ENCODE measurements at regions of chr17 and their contacts with region 1.

Region 1: DNA sequence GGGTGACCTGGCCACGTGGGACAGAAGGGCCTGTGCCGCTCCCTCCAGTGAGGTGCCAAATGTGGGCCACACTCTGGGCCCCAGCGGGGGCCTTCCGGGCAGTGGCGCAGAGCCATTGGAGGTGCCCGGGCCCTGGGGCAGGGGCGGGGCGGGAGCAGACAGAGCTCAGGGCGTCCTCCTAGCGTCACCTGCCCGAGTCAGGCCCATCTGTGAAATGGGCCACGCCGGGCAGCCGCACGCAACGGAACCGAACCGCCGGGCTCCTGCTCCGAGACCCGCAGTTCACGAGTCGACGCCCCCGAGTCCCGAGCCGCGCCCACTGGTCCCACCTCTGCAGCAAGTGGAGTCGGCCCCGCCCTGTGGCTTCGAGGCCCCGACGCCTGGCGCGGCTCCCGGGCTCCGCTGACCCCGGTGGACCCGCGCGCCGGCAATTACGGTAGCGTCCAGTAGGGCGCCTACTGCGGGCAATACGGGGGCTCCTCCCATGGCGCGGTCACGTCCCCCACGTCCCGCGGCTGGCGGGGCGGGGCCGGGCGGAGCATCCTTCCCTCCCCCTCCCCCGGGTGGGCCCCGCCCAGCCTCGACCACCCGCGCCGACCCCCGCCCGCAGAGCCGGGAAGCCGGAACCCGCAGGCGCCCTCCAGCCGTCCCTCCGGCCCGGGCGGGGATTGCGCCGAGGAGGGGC is 1.9 kb downstream of the SLC16A3 start:
- DNase-seq: peak; percentile 94
- ATAC-seq: peak; percentile 82

Region 2: DNA sequence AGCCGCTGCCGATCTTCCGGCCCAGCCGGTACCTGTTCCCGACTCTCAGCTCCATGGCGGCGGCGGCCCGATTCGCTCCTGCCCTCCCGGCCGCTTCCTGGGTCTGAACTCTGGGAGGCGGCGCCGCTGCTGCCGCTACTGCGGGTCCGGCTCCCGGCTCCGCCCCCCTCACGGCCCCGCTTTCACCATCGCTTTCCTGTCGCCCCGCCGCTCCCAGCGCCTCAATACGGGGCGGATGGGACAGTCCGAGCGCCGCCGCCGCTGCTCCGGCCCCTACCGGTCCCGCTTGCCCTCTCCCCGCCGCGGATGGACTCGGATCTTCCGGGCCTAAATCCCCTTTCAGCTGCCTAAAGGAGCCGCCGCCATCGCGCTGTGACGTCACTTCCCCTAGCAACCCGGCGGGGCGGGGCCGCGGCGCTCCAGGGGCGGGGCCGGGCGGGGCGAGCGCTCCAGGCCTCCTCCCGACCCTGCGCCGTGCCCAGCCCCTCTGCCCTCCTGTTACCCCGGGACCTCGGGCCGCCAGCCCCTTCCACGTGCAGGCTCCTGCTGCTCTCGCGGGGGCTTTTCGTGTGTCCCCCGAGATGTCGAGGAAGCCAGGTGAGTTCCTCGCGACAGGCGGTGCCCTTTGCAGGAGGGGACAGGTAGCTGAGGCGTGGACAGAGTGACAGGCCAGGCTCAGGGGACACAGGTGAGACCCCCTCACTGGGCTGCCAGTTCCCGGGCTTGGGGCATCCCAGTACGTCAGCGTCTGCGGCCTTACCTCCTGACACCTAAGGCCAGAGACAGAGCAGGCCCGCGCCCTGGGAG is 42.8 kb after region 1 on chr17 and contains the start of gene CSNK1D:
- intact Hi-C with region 1: loop called (anchors 5 kb)
- DNase-seq: peak; percentile 96
- ATAC-seq: peak; percentile 95
- total RNA-seq, gene CSNK1D: 62.6 TPM

Region 3: DNA sequence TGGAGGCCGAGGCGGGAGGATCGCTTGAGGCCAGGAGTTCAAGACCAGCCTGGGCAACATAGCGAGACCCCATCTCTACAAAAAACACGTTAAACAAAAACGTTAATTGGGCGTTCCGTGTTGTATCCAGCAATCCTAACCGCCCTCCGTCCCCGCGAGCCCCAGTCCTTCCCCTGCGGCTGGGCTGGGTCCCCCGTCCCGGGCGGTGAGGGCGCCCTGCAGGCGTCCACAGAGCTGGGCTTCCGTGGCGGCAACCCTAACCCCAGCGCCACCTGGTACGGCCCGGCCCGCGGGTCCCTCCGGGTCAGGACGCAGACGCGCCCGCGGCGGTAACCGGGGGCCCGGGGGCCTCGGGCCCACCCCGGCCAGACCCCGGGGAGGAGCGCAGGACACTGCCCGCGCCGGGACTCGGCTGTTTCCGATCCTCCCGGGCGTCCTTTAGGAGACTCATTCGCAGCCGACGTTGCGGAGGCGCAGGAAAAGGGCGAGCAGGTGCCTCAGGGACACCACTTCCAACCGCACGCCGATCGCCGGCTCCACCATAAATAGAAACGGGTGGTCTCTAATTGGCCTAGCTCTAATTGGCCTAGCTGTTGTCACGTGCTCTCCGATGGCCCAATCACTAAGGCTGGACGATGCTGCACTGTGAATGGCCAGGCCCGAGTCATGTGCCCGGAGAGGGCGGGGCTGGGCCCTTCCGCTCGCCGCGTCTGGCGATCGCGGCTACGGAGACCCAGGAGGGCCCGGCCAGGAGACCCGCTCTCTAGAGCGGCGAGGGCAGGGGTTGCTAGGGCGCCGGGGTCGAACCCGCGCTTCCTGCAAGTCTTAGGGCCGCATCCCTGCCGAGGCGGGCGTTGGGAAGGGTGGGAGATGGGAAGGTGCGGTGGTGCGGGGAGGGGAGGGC is 61.7 kb after region 1 on chr17:
- intact Hi-C with region 1: no loop called
- DNase-seq: peak; percentile 97
- ATAC-seq: peak; percentile 96